ENCODE measurements at regions of chr19 and their contacts with region 1.

Region 1: DNA sequence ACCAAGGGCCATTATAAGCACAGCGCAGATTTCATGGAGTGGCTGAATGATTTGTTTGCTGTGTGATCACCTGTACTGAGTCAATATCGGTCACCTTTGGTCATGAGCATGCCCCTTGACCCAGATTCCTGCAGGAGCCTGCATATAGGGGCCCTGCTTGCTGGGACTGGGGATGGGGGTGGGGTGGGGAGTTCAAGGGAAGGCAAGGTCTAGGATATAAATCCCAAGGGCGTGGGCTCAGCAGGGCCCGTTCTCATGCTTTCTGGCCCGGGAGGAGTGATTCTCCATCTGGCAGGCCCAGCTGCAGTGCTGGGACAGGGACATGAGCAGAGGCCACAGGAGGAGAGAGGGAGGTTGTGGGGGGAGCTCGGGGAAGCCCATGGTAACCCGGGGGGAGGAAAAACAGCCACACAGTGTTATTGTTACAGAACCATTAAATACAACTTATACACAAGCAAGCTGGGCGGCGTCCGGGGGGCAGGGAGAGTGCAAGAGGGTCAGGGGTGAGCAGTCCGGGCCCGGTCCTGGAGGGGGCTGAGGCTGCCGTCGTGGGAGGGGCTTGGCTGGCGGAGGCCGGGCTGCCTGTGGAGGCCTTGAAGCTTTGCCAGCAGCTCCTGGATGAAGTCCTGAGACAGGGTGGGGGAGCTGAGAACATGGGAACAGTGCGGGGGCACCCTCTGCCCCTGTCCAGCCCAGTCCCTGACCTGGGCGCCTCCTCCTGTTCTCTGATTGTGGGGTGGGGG is 5.2 kb downstream of the PPP1R14A start:
- DNase-seq: peak in 1 of 2 experiments; percentile 70
- H3K4me3 ChIP-seq: peak overlapping the region in 3 of 4 experiments; percentile 4 to 50 (median 14); a peak in 5 of 8 replicates
- H3K27ac ChIP-seq: no peak overlapping the region
- H3K4me1 ChIP-seq: peaks cover 10 to 39% (median 24%) of the 10 kb centered on the region in 4 experiments
- H3K27me3 ChIP-seq: peaks cover 0 to 9% (median 8%) of the 10 kb centered on the region in 4 experiments; a peak in 4 of 7 replicates
- CTCF ChIP-seq: no peak
- EP300 ChIP-seq: no peak
- POLR2A ChIP-seq: no peak
- RAD21 ChIP-seq: no peak

Region 2: DNA sequence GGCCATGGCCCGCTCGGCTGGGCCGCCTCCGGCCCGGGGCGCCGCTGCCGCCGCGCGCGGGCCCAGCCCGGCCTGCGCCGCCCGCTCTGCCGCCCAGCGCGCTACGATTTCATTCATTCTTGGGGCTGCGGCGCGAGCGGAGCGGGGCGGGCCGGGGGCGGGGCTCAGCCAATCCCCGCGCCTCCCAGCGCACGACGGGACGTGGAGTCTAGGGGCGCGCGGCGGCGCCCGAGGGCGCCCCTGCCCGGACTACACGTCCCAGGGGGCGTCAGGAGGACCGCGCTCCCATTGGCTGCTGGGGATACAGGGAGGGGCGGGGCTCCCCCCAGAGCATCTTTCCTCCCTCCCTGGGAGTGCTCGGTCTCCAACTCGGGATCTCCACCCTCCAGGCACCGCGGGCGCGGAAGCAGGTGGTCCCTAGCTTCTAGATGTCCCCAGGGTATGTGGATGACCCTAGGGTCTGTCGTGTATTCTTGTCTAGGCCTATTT is 21.4 kb before region 1 on chr19:
- CTCF ChIA-PET with region 1: interaction called, 45 read pairs
- POLR2A ChIA-PET with region 1: interaction called, 10 read pairs
- DNase-seq: peak in 1 of 2 experiments; percentile 85
- H3K4me3 ChIP-seq: peak overlapping the region; percentile 5 to 86 (median 40); a peak in 5 of 8 replicates
- H3K27ac ChIP-seq: no peak overlapping the region
- H3K4me1 ChIP-seq: peaks cover 6 to 19% (median 13%) of the 10 kb centered on the region in 4 experiments
- H3K27me3 ChIP-seq: peaks cover 0 to 10% (median 5%) of the 10 kb centered on the region in 4 experiments; a peak in 3 of 7 replicates
- CTCF ChIP-seq: no peak
- EP300 ChIP-seq: no peak
- POLR2A ChIP-seq: no peak
- RAD21 ChIP-seq: no peak